B cell (primary cell): ENCODE measurements at regions of chr16 and their contacts with region 1.

Region 1: DNA sequence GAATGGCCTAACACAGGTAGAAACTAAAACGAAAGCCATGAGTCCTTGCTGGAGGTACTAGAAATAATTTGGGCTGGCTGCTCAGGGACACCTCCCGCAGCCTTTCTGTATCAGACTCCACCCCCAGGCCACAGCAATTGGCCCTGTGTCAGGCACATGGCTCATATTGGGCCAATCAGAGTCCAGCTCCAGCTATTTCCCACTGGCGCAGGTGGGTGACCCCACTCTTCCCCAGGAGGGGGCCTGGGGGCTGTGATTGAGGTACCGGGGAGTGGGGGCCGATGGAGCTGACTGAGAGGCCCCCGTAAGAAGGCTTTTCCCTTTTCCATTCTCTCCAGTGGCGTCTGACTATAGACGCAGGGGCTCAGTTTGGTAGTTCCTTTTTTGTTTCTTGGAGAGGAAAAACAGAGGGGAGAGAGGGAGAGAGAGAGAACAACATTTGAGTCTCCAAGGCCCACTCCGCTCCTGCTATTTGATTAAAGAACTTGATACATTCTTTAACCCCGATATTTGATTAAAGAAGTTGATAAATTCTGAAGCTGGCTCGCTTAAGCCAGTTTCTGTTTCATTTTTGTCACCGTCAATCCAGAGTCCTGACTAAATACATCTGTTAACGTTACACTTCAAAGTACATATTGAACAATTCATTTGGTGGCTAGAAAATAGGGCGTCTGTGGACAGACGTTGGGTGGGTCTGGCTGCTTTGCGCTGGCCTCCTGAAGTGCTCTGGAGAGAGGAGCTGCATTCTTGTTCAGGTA is 26.3 kb downstream of the FOXL1 start:
- DNase-seq: peak; percentile 66
- ATAC-seq: peak; percentile 99
- H3K4me3 ChIP-seq: peak overlapping the region; percentile 64 to 90 (median 72)
- H3K4me3 Mint-ChIP-seq: peak overlapping the region; percentile 88
- H3K27ac ChIP-seq: peak overlapping the region; percentile 68 to 79
- H3K27ac Mint-ChIP-seq: peak overlapping the region; percentile 67
- H3K4me1 ChIP-seq: peaks cover 4 to 10% of the 10 kb centered on the region in 2 donors
- H3K4me1 Mint-ChIP-seq: peaks cover 6% of the 10 kb centered on the region
- H3K27me3 ChIP-seq: peaks cover 0 to 9% (median 0%) of the 10 kb centered on the region in 4 experiments
- H3K27me3 Mint-ChIP-seq: peaks cover 15% of the 10 kb centered on the region
- CTCF ChIP-seq: no peak

Region 2: DNA sequence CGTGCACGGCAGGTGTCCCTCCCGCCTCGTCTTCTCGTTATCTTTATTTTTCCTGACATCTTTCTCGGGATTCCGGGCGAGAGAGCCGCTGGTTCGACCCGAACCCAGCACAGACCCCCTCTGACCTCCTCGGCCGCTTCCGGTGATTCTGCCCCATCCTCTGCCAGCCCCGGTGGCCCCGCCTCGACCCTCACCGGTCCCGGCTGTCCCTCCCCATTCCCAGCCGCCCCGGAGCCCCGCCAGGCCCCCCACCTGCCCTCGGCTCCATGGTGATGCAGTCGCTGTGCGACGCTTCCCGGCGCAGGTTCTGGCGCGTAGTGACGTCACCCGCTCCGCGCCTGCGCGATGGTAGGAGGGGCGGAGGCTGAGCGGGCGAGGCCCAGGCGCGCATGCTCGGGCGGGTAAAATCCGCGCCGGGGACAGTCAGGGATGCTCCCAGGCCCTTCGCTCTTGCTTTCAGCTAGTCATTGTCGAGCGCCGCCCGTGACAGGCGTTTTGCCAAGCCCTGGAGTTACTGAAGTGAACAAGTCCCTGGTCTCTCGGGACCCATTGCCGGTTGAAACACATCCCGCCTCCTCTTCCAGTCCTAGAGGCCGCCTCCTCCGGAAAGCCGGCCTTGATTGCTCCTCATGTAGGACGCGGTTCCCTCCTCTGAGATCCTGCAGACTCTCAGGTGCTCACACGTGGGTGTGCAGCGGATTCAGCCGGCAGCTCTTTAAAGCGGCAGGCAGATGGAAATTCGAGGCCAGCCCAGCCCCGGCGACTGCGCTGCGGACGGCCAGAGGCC is 49.5 kb before region 1 on chr16 and contains the start of gene MTHFSD:
- CTCF ChIA-PET with region 1: no interaction called
- POLR2A ChIA-PET with region 1: no interaction called
- intact Hi-C with region 1: loop called (anchors 1 kb)
- DNase-seq: peak; percentile 95
- ATAC-seq: peak; percentile 97
- H3K4me3 ChIP-seq: peak within 1 kb of the TSS; percentile 78 to 98 (median 87)
- H3K4me3 Mint-ChIP-seq: peak within 1 kb of the TSS; percentile 95
- H3K27ac ChIP-seq: peak within 1 kb of the TSS; percentile 89 to 94
- H3K27ac Mint-ChIP-seq: peak within 1 kb of the TSS; percentile 95
- H3K4me1 ChIP-seq: peaks cover 6 to 16% of the 10 kb centered on the region in 2 donors
- H3K4me1 Mint-ChIP-seq: peaks cover 16% of the 10 kb centered on the region
- H3K27me3 ChIP-seq: peaks cover 0 to 7% (median 1%) of the 10 kb centered on the region in 4 experiments
- H3K27me3 Mint-ChIP-seq: peaks cover 3% of the 10 kb centered on the region
- CTCF ChIP-seq: no peak
- total RNA-seq, gene MTHFSD: 42.0 and 51.7 TPM in 2 replicates

Region 3: GRCh38 chr16:86578611-86579267 is 25.9 kb before region 1 on chr16:
- CTCF ChIA-PET with region 1: no interaction called
- POLR2A ChIA-PET with region 1: no interaction called
- intact Hi-C with region 1: no loop called
- DNase-seq: no peak
- ATAC-seq: no peak
- H3K4me3 ChIP-seq: no peak overlapping the region
- H3K4me3 Mint-ChIP-seq: no peak overlapping the region
- H3K27ac ChIP-seq: no peak overlapping the region
- H3K27ac Mint-ChIP-seq: no peak overlapping the region
- H3K4me1 ChIP-seq: peaks cover 14% of the 10 kb centered on the region in 2 donors
- H3K4me1 Mint-ChIP-seq: peaks cover 20% of the 10 kb centered on the region
- H3K27me3 ChIP-seq: peaks cover 0 to 57% (median 33%) of the 10 kb centered on the region in 4 experiments
- H3K27me3 Mint-ChIP-seq: peaks cover 76% of the 10 kb centered on the region
- CTCF ChIP-seq: no peak